ENCODE measurements at regions of chr16 and their contacts with region 1.

Region 1: GRCh38 chr16:50335196-50335958 is 33.4 kb downstream of the BRD7 start:
- DNase-seq: no peak
- H3K4me3 Mint-ChIP-seq: peak overlapping the region; percentile 37
- H3K27ac Mint-ChIP-seq: peak overlapping the region; percentile 87
- H3K4me1 Mint-ChIP-seq: peaks cover 48% of the 10 kb centered on the region
- H3K27me3 Mint-ChIP-seq: no peaks in the 10 kb centered on the region

Region 2: GRCh38 chr16:50273681-50274325 is 61.6 kb before region 1 on chr16:
- intact Hi-C with region 1: loop called (anchors 2 kb)
- DNase-seq: peak; percentile 20
- H3K4me3 Mint-ChIP-seq: peak overlapping the region; percentile 95
- H3K27ac Mint-ChIP-seq: peak overlapping the region; percentile 98
- H3K4me1 Mint-ChIP-seq: peaks cover 95% of the 10 kb centered on the region
- H3K27me3 Mint-ChIP-seq: no peaks in the 10 kb centered on the region

Region 3: DNA sequence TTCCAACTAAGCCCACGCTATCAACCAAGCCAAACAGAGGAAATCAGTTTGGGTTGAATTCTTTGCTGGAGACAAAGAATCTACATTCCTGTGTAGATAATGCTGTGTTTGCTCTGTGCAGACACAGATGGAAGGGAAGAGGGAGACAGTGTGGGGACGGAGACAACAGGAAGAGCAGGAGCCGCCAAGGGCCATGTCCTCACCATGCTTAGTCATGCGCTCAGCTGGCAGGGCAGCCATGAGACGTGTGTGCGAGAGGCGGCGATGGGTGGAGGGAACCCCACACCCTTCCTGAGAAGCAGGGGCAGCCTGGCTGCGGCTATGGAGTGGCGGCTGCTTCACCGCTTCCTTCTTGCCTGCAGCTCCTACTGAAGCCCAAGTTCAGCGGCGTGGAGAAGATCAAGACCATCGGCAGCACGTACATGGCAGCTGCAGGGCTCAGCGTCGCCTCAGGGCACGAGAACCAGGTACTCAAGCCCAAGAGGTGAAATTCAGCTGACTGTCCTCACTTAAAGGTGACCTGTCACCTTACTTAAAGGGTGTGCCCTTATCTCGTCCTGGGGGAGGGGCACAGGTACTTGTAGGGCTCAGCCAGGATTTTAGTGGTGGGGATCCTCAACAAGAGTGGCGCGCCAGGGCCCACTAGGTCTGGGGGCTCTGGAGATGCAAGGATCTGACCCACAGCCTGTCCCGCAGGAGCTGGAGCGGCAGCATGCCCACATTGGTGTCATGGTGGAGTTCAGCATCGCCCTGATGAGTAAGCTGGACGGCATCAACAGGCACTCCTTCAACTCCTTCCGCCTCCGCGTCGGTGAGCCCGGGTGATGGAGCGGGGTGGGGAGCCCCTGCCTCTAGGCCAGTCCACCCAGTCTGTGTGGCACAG is 21.5 kb before region 1 on chr16:
- intact Hi-C with region 1: no loop called
- DNase-seq: peak; percentile 49
- H3K4me3 Mint-ChIP-seq: peak overlapping the region; percentile 65
- H3K27ac Mint-ChIP-seq: peak overlapping the region; percentile 93
- H3K4me1 Mint-ChIP-seq: peaks cover 25% of the 10 kb centered on the region
- H3K27me3 Mint-ChIP-seq: no peaks in the 10 kb centered on the region

Region 4: GRCh38 chr16:50354629-50355456 is 19.5 kb after region 1 on chr16:
- intact Hi-C with region 1: loop called (anchors 2 kb)
- DNase-seq: no peak
- H3K4me3 Mint-ChIP-seq: no peak overlapping the region
- H3K27ac Mint-ChIP-seq: no peak overlapping the region
- H3K4me1 Mint-ChIP-seq: peaks cover 29% of the 10 kb centered on the region
- H3K27me3 Mint-ChIP-seq: no peaks in the 10 kb centered on the region

Region 5: GRCh38 chr16:50763211-50763610 is 427.8 kb after region 1 on chr16:
- intact Hi-C with region 1: loop called (anchors 5 kb)
- DNase-seq: no peak
- H3K4me3 Mint-ChIP-seq: no peak overlapping the region
- H3K27ac Mint-ChIP-seq: peak overlapping the region; percentile 13
- H3K4me1 Mint-ChIP-seq: peaks cover 84% of the 10 kb centered on the region
- H3K27me3 Mint-ChIP-seq: no peaks in the 10 kb centered on the region

Region 6: DNA sequence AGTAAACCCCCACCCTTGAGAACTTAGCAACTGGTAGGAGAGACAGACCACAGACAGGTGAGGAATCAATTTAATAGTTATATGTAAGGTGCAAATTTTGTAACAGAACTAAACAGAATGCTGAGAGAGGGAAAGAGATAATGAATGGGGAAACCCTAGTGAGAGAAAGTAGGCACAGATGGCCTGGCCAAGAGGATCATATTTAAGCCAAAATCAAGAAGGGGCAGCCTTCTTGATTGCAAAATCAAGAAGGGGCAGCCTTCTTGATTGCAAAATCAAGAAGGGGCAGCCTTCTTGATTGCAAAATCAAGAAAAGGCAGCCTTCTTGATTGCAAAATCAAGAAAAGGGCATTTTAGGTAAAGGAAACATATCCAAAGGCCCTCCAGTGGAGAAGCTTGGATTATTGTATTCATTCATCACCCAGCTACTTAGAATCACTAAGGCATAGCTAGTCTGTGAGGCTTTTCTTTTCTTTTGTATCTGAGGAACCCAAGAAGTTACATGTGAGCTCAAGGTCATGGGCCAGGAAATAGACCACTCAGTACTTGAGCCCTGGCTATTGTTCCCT is 597.1 kb after region 1 on chr16:
- intact Hi-C with region 1: no loop called
- DNase-seq: no peak
- H3K4me3 Mint-ChIP-seq: no peak overlapping the region
- H3K27ac Mint-ChIP-seq: no peak overlapping the region
- H3K4me1 Mint-ChIP-seq: no peaks in the 10 kb centered on the region
- H3K27me3 Mint-ChIP-seq: no peaks in the 10 kb centered on the region

Measured in activated T-helper 1 cell treated with anti-CD3 and anti-CD28 coated beads, Interleukin-12 subunit alpha, Interleukin-12 subunit beta, Interleukin-2, Interleukin-4 antibody, amounts not matched to agents 30 ng/mL and 10 ng/mL and 1 ng/mL, durations not matched to agents 14 hours and 24 hours and 36 hours (primary cell).